IMR-90 (cell line): ENCODE measurements at regions of chr20 and their contacts with region 1.

Region 1: DNA sequence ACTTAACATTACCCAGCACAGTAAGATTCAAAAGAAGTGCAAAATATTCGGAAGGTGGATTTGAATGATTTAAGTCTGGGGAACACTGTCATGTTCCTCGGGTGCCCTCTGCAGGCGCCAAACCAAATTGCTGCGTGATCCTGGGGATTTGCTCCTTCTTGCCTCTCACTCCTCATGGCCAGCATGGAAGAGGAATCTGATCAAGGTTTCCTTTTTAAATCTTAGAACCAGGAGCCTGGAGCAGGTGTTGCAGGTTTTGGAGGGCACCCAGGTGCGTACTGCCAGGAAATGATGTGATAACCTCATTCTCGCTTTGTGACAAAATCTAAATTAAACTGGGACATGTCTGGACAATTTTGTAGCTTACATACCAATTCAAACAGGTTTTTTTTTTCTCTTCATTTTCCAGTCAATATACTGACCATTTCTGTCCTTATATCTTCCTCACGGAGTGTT is 8.1 kb upstream of the PFDN4 start:
- DNase-seq: peak; percentile 73
- ATAC-seq: peak; percentile 90
- H3K4me3 ChIP-seq: no peak overlapping the region
- H3K27ac ChIP-seq: no peak overlapping the region
- H3K4me1 ChIP-seq: no peaks in the 10 kb centered on the region
- H3K27me3 ChIP-seq: peaks cover 10% of the 10 kb centered on the region; the same call in 1 of the 2 replicates
- CTCF ChIP-seq: peak; percentile 99
- POLR2A ChIP-seq: no peak; the same call in 1 of the 2 replicates
- RAD21 ChIP-seq: peak; percentile 98

Region 2: GRCh38 chr20:53872561-53873229 is 327.1 kb before region 1 on chr20:
- CTCF ChIA-PET with region 1: no interaction called
- POLR2A ChIA-PET with region 1: no interaction called
- dilution Hi-C with region 1: no loop called
- in situ Hi-C with region 1: no loop called
- intact Hi-C with region 1: no loop called
- DNase-seq: peak; percentile 30
- ATAC-seq: peak; percentile 33
- H3K4me3 ChIP-seq: no peak overlapping the region
- H3K27ac ChIP-seq: peak overlapping the region; percentile 51; the same call in 1 of the 2 replicates
- H3K4me1 ChIP-seq: peaks cover 15% of the 10 kb centered on the region
- H3K27me3 ChIP-seq: no peaks in the 10 kb centered on the region
- CTCF ChIP-seq: no peak
- POLR2A ChIP-seq: no peak
- RAD21 ChIP-seq: no peak

Region 3: DNA sequence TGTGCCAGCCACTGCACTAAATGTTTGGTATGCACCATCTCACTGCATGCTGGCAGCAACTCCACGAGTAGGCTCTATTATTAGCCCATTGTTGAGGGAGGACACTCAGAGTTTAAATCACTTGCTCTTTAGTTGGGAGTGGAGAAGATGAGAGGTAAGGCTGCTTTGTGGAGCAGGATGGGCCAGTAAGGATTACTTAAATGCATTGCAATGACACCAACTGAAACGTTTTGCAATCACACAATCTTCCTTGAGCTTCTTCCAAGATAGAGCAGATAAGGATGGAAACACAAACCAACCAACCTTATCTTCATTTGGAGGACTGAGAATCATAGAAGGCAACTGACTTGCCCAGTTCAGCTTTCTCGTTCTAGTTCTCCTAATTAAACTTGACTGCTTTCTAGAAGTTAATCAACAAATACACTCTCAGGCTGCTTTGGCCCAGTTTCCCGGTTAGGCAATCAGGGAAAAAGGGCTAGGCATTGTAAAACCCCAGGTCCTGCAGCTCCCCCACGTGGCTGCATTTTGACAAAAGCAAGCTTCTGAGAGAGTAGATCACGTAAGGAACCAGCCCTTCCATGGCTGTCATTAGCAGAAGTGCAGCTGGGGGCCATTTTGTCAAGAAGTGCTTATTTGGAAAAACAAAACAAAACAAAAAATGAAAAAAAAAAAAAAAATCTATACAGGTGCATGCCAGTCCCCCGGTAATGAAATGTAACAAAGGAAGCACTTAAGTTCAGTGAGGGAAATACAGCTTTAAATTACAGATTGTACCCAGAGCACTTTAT is 260.0 kb before region 1 on chr20:
- CTCF ChIA-PET with region 1: interaction called, 3 read pairs
- POLR2A ChIA-PET with region 1: no interaction called
- dilution Hi-C with region 1: no loop called
- in situ Hi-C with region 1: no loop called
- intact Hi-C with region 1: loop called (anchors 5 kb)
- DNase-seq: peak; percentile 94
- ATAC-seq: peak; percentile 89
- H3K4me3 ChIP-seq: no peak overlapping the region
- H3K27ac ChIP-seq: peak overlapping the region; percentile 66
- H3K4me1 ChIP-seq: peaks cover 16% of the 10 kb centered on the region
- H3K27me3 ChIP-seq: no peaks in the 10 kb centered on the region
- CTCF ChIP-seq: peak; percentile 92
- POLR2A ChIP-seq: 0 out of 2 replicates have a peak, but pooled peaks have one; percentile 61
- RAD21 ChIP-seq: peak; percentile 95

Region 4: DNA sequence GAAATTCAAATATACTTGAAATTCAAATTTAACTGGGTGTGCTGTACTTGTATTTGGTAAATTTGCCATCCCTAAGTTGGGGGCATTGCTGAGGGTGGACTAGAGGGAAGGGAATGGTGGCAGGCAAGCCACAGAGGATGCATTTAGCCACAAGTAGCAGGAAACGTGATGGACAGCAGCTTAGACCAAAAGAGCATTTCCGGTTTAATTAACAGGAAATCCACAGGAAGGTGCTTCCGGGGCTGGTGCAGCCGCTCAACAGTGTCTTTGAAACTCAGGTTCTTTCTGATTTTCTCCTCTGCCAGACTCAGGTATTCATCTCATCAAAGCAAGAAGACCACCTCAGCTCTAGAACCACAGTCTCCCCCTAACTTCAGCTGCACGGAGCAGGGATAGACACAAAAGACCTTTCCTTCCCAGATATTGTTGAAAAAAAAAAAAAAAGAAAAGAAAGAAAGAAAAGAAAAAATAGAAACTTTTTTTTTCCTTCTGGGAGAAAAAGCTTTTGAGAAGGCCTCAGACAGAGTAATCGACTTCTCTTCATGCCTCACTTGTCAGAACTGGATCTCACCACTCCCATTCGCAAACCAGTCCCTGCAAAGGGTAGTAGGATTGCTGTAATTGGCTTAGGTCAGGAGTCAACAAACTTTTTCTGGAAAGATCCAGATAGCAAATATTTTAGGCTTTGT is 121.3 kb before region 1 on chr20:
- CTCF ChIA-PET with region 1: interaction called, 3 read pairs
- POLR2A ChIA-PET with region 1: no interaction called
- dilution Hi-C with region 1: loop called (anchors 25 kb)
- in situ Hi-C with region 1: no loop called
- intact Hi-C with region 1: no loop called
- DNase-seq: no peak
- ATAC-seq: no peak
- H3K4me3 ChIP-seq: no peak overlapping the region
- H3K27ac ChIP-seq: no peak overlapping the region
- H3K4me1 ChIP-seq: no peaks in the 10 kb centered on the region
- H3K27me3 ChIP-seq: peaks cover 2% of the 10 kb centered on the region; the same call in 1 of the 2 replicates
- CTCF ChIP-seq: no peak
- POLR2A ChIP-seq: no peak
- RAD21 ChIP-seq: no peak

Region 5: GRCh38 chr20:54097236-54097529 is 102.6 kb before region 1 on chr20:
- CTCF ChIA-PET with region 1: interaction called, 31 read pairs
- POLR2A ChIA-PET with region 1: interaction called, 3 read pairs
- dilution Hi-C with region 1: loop called (anchors 25 kb)
- in situ Hi-C with region 1: loop called (anchors 5 kb)
- intact Hi-C with region 1: loop called (anchors 1 kb)
- DNase-seq: no peak
- ATAC-seq: no peak
- H3K4me3 ChIP-seq: no peak overlapping the region
- H3K27ac ChIP-seq: no peak overlapping the region
- H3K4me1 ChIP-seq: no peaks in the 10 kb centered on the region
- H3K27me3 ChIP-seq: peaks cover 7% of the 10 kb centered on the region; the same call in 1 of the 2 replicates
- CTCF ChIP-seq: no peak
- POLR2A ChIP-seq: no peak
- RAD21 ChIP-seq: no peak

Region 6: DNA sequence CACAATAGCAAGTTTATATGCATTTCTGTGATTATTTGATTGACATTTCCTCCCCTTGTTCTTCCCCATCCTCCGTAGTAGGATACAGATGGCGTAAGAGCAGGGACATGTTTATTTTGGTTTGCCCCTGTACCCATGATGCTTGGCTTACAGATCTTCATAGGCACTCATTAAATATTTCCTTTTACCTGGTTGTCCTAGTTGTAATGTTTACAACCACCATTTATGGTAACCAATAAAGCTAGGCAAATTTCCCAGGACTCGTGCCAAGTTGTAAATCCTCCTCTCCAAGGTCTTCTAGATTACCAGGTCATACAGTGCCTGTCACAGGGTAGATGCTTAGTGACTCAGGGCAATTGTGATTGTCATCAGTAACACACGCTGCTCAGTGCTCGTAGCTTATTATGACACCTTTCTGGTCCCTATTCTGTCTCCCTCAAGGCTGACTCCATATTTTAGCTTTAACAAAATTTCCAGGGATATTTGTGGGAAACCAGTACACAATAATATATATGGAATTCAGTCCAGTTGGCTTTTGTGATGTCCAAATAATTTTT is 50.7 kb before region 1 on chr20:
- CTCF ChIA-PET with region 1: no interaction called
- POLR2A ChIA-PET with region 1: no interaction called
- dilution Hi-C with region 1: no loop called
- in situ Hi-C with region 1: no loop called
- intact Hi-C with region 1: loop called (anchors 5 kb)
- DNase-seq: no peak
- ATAC-seq: no peak
- H3K4me3 ChIP-seq: no peak overlapping the region
- H3K27ac ChIP-seq: no peak overlapping the region
- H3K4me1 ChIP-seq: no peaks in the 10 kb centered on the region
- H3K27me3 ChIP-seq: peaks cover 8% of the 10 kb centered on the region
- CTCF ChIP-seq: no peak
- POLR2A ChIP-seq: no peak
- RAD21 ChIP-seq: no peak

Region 7: DNA sequence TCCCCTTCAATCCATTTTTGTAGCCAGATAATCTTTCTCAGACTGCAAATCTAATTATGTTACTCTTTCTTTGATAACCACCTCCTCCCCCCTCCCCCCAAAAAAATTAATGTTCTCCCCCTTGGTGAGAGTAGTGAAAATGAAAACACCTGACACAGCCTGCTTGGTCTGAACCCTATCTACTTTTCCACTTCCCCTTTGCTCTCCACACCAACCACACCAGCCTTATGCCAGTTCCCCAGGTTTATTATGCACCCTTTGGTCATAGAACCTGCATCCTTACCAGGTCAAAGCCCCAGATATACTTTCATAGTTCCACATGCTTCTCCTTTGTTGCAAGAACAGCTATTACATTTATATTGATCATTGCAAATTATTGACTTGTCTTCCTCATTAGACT is 27.5 kb after region 1 on chr20:
- CTCF ChIA-PET with region 1: no interaction called
- POLR2A ChIA-PET with region 1: no interaction called
- dilution Hi-C with region 1: no loop called
- in situ Hi-C with region 1: no loop called
- intact Hi-C with region 1: no loop called
- DNase-seq: no peak
- ATAC-seq: no peak
- H3K4me3 ChIP-seq: no peak overlapping the region
- H3K27ac ChIP-seq: no peak overlapping the region
- H3K4me1 ChIP-seq: peaks cover 4% of the 10 kb centered on the region; the same call in 1 of the 2 replicates
- H3K27me3 ChIP-seq: no peaks in the 10 kb centered on the region
- CTCF ChIP-seq: no peak
- POLR2A ChIP-seq: no peak
- RAD21 ChIP-seq: no peak